Posterior vena cava (tissue), 2 donors: ENCODE measurements at regions of chr14 and their contacts with region 1.

Region 1: GRCh38 chr14:88146881-88147649 is 142.1 kb downstream of the GPR65 start:
- DNase-seq: no peak

Region 2: DNA sequence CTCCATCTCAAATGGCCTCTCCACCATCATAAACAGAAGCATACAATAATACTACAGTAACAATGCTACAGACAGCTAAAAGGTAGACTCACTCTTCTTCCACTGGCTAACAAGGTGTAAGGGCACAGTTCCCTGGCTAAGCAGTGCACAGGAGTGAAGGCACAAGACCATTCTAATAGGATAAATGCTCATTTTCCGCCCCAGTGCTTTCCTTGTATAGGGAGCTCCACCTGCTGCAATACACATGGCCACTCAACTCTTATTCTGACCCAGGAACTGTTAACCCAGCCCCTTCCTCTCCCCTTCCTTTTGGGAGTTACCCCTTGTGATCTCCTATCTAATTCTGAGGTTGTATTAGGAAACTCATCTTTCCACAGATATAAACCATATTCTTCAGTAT is 51.4 kb after region 1 on chr14:
- intact Hi-C with region 1: loop called in 1 of 2 experiments (anchors 1 kb)
- DNase-seq: no peak